Right ventricle myocardium inferior (tissue), 1 donor: ENCODE measurements at regions of chr2 and their contacts with region 1.

Region 1: GRCh38 chr2:9205963-9206948 is at the start of gene ASAP2:
- DNase-seq: peak; percentile 91
- ATAC-seq: peak; percentile 78
- total RNA-seq, gene ASAP2: 12.9 TPM

Region 2: DNA sequence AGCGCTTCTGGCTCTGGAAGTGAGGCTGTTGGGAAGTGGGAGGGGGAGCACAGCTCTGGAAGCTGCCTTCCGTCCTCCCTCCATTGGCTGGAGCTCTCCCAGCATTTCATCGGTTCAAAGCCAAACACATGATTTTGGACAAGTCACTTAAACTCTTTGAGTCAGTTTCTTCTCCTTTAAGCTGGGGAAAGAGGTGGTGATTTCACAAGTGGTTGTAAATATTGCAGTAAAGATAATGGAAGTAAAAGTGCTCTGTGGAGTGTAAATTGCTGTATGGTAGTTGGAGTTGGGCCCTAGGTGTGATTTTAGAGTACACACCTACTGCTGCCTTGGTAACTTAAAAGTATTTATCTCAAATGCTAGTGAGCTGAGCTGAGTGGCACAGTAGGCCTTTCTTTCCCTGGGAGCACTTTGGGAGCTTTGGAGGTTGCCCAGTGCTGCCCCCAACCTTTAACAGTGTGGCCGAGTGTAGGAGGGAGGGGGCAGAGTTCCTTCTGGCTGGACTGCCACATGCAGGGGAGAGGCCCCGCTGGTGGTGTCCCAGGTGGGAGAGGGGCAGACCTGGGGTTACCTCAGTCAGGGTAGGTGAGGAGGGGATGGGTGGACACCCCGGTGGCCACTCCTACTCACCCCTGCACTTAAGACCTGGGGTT is 55.1 kb after region 1 on chr2:
- intact Hi-C with region 1: loop called (anchors 5 kb)
- DNase-seq: no peak
- ATAC-seq: peak; percentile 48

Region 3: DNA sequence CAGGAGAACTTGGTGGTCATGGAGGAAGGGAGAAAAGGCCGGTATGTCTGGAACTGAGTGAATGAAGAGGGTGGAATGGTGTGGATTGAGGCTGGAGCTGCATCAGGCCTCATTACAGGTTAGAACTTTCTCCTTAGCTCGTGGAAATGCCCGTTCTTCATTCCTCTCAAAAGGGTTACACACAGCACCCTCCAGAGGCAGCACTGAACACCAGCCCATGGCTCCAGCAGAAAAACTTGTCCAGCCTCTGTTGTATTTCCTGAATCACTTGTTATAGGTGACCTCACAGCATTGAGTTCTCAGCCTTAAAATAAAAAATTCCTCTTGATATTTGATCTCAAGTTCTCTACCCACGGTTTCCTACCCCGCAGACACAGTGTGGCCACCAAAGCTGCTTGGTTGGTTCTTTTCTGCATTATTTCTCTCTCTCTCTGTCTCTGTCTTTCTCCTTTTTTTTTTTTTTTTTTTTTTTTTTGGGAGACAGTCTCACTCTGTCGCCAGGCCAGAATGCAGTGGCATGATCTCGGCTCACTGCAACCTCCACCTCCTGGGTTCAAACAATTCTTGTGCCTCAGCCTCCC is 127.4 kb after region 1 on chr2:
- intact Hi-C with region 1: loop called (anchors 2 kb)
- DNase-seq: no peak
- ATAC-seq: peak; percentile 84

Region 4: GRCh38 chr2:9423100-9423921 is 217.1 kb after region 1 on chr2 and contains the starts of genes CPSF3 and ITGB1BP1:
- intact Hi-C with region 1: loop called (anchors 2 kb)
- DNase-seq: peak; percentile 98
- ATAC-seq: peak; percentile 97
- total RNA-seq, gene CPSF3: 16.5 TPM
- total RNA-seq, gene ITGB1BP1: 93.1 TPM